ENCODE measurements at regions of chr20 and their contacts with region 1.

Region 1: DNA sequence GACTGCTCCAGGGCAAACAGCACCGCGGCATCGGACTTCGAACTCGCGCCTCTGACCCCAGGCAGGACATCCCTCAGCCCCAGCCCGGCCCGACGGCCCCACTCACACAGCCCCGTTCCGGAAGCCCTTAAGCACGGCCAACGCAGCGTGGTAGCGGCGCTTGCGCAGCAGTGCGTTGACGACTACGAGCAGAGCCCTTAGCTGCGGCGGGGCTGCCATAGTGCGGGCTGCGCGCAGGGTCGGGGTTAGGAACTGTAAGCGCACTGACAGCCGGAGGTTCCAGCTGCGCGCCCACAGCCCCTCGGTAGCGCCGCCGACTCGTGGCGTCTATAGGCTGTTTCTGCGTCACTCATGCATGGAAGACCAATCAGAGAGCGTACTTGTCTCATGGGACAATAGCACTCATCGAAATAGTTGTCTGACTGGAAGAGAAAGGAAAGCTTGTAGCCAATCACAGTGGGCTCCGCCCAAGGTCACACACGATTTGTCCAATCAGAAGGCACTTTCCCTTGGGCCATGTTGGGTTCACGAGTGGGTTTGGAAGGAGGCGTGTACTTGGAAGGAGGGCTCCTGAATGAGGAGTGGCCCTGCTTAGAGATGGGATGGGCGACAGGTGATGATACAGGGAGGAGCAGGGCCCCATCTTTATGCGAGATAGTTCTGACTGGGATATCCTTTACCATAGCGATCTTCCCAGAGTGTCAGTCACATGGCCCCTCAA is at the start of gene PXMP4:
- DNase-seq: peak; percentile 92
- ATAC-seq: peak; percentile 99
- H3K4me3 Mint-ChIP-seq: peak within 1 kb of the TSS; percentile 88
- H3K27ac Mint-ChIP-seq: peak within 1 kb of the TSS; percentile 83
- H3K4me1 Mint-ChIP-seq: peaks cover 18% of the 10 kb centered on the region
- H3K27me3 Mint-ChIP-seq: no peaks in the 10 kb centered on the region
- total RNA-seq, gene PXMP4: 8.8 to 10.2 TPM

Region 2: DNA sequence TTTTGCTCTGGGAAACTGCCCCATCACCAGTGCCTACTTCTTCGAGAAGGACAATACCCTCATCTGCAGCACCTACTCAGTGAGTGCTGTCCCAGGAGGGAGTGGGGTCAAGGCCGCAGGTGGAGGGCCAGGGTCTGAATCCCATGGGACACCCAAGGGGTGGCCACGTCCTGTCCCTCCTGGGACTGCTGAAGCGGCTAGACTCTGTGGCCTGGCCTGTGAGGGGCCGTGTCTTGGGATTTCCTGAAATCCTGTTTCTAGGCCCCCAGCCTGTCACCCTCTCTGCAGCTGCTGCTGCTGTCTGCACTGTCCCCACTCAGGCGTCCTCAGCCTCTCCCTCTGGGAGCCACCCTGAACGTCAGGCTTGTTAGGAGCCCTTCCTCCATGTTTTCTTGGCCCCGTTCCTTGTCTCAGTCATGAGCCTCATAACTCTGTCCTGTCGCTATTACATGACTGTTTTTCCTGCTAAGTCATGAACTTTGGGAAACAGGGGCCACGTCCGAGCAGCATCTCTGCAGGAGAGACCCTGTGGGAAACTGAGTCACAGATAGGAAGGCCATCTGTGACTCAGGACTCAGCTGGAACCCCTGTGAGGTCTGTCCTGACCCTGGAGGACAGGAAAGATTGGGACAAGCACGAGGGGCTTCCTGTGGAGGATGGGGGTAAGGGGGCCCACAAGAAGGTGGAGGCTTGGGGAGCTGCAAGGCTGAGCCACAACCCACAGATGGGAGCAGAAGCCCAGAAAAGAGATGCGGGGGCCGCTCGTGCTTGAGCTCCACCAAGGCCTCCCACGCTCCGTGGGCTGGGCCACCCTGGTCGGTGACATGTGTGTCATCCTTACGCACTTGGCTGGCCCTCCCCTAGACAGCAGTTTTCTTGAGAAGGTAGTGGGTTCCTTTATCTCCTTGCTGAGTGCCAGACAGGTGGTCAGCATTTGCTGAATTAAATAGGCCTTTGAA is 811.5 kb before region 1 on chr20:
- CTCF ChIA-PET with region 1: no interaction called
- POLR2A ChIA-PET with region 1: no interaction called
- intact Hi-C with region 1: no loop called
- DNase-seq: peak; percentile 32
- ATAC-seq: peak; percentile 36
- H3K4me3 Mint-ChIP-seq: no peak overlapping the region
- H3K27ac Mint-ChIP-seq: no peak overlapping the region
- H3K4me1 Mint-ChIP-seq: peaks cover 19% of the 10 kb centered on the region
- H3K27me3 Mint-ChIP-seq: no peaks in the 10 kb centered on the region

Region 3: DNA sequence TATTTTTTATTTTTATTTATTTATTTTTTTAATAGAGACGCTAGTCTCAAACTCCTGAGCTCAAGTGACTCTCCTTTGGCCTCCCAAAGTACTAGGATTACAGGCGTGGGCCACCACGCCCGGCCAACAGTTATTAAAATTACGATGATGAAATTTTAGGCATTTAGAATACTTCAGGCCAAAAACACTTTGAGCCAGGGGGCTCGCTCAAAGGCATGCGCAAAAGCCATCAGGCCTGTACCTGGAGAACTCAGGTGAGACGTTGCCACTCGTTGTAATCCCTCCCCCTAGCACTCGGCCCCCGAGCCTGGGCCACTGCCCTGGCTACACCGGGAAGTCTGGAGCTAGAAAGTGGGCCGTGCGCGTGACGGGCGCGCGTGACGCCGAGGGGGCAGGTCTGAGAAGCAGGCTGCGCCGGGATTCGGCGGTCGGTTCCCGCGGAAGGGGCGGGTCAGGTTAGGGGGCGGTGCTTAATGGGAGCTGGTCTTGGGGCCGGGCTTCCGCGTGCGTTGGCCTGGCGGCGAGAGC is 230.6 kb before region 1 on chr20:
- CTCF ChIA-PET with region 1: interaction called, 3 read pairs
- POLR2A ChIA-PET with region 1: interaction called, 3 read pairs
- intact Hi-C with region 1: loop called in 1 of 2 experiments (anchors 1 kb)
- DNase-seq: peak; percentile 99
- ATAC-seq: peak; percentile 98
- H3K4me3 Mint-ChIP-seq: peak overlapping the region; percentile 85
- H3K27ac Mint-ChIP-seq: peak overlapping the region; percentile 78
- H3K4me1 Mint-ChIP-seq: peaks cover 6% of the 10 kb centered on the region
- H3K27me3 Mint-ChIP-seq: no peaks in the 10 kb centered on the region

Region 4: DNA sequence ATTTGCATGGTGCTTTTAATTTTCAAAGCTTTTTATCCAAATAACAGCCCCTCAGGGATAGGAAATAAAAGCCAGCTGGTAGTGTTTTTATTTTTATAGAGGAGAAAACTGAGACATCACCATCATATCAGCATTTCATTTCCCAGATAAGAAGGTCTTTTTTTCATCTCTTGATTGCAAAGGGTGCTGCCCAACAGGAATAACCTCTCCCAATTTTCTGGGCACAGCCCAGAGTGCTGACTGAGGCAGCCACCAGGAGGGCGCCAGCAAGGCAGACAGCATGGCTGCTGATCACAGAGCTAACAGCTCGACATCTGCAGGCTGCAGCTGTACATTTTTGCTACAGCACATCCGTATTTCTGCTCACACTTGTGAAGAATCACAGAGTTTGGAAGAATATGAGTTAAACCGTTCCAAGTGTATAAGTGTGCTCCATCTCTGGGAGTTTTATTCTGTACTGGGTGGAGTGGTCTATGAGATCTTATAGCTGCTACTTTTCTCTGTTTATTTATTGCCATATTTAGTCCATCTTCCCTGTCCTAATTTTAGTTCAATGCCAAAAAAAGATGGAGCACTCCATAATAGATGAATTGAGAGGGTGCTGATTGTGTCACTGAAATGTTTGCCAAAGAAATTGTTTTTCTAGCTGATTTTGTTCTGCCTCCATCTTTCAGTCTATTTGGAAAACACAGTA is 143.6 kb before region 1 on chr20:
- CTCF ChIA-PET with region 1: no interaction called
- POLR2A ChIA-PET with region 1: no interaction called
- intact Hi-C with region 1: no loop called
- DNase-seq: no peak
- ATAC-seq: no peak
- H3K4me3 Mint-ChIP-seq: no peak overlapping the region
- H3K27ac Mint-ChIP-seq: no peak overlapping the region
- H3K4me1 Mint-ChIP-seq: peaks cover 9% of the 10 kb centered on the region
- H3K27me3 Mint-ChIP-seq: no peaks in the 10 kb centered on the region